Activated CD4-positive, alpha-beta T cell treated with anti-CD3 and anti-CD28 coated beads for 36 hours (primary cell): ENCODE measurements at regions of chr1 and their contacts with region 1.

Region 1: GRCh38 chr1:161225534-161226319 is at the start of gene TOMM40L:
- DNase-seq: peak; percentile 91
- ATAC-seq: peak; percentile 95
- H3K4me3 Mint-ChIP-seq: peak within 1 kb of the TSS; percentile 97
- H3K27ac Mint-ChIP-seq: peak within 1 kb of the TSS; percentile 98
- H3K4me1 Mint-ChIP-seq: peaks cover 33% of the 10 kb centered on the region
- H3K27me3 Mint-ChIP-seq: no peaks in the 10 kb centered on the region
- total RNA-seq, gene TOMM40L: 12.3 to 13.2 TPM

Region 2: GRCh38 chr1:161076410-161076809 is 149.3 kb before region 1 on chr1:
- CTCF ChIA-PET with region 1: no interaction called
- POLR2A ChIA-PET with region 1: no interaction called
- intact Hi-C with region 1: no loop called
- DNase-seq: no peak
- ATAC-seq: no peak
- H3K4me3 Mint-ChIP-seq: no peak overlapping the region
- H3K27ac Mint-ChIP-seq: no peak overlapping the region
- H3K4me1 Mint-ChIP-seq: peaks cover 7% of the 10 kb centered on the region
- H3K27me3 Mint-ChIP-seq: peaks cover 2% of the 10 kb centered on the region

Region 3: GRCh38 chr1:161132410-161133219 is 93.1 kb before region 1 on chr1 and contains the start of gene DEDD:
- CTCF ChIA-PET with region 1: interaction called, 3 read pairs
- POLR2A ChIA-PET with region 1: interaction called, 8 read pairs
- intact Hi-C with region 1: loop called (anchors 1 kb)
- DNase-seq: peak; percentile 95
- ATAC-seq: peak; percentile 97
- H3K4me3 Mint-ChIP-seq: no peak within 1 kb of the TSS
- H3K27ac Mint-ChIP-seq: peak within 1 kb of the TSS; percentile 62
- H3K4me1 Mint-ChIP-seq: peaks cover 44% of the 10 kb centered on the region
- H3K27me3 Mint-ChIP-seq: no peaks in the 10 kb centered on the region
- total RNA-seq, gene DEDD: 33.9 to 44.9 TPM

Region 4: GRCh38 chr1:161177112-161177935 is 48.4 kb before region 1 on chr1 and contains the start of gene B4GALT3:
- CTCF ChIA-PET with region 1: interaction called, 12 read pairs
- POLR2A ChIA-PET with region 1: interaction called, 9 read pairs
- intact Hi-C with region 1: loop called in 1 of 2 experiments (anchors 1 kb)
- DNase-seq: peak; percentile 98
- ATAC-seq: peak; percentile 86
- H3K4me3 Mint-ChIP-seq: peak within 1 kb of the TSS; percentile 91
- H3K27ac Mint-ChIP-seq: peak within 1 kb of the TSS; percentile 98
- H3K4me1 Mint-ChIP-seq: peaks cover 57% of the 10 kb centered on the region
- H3K27me3 Mint-ChIP-seq: no peaks in the 10 kb centered on the region
- total RNA-seq, gene B4GALT3: 40.5 to 51.8 TPM

Region 5: DNA sequence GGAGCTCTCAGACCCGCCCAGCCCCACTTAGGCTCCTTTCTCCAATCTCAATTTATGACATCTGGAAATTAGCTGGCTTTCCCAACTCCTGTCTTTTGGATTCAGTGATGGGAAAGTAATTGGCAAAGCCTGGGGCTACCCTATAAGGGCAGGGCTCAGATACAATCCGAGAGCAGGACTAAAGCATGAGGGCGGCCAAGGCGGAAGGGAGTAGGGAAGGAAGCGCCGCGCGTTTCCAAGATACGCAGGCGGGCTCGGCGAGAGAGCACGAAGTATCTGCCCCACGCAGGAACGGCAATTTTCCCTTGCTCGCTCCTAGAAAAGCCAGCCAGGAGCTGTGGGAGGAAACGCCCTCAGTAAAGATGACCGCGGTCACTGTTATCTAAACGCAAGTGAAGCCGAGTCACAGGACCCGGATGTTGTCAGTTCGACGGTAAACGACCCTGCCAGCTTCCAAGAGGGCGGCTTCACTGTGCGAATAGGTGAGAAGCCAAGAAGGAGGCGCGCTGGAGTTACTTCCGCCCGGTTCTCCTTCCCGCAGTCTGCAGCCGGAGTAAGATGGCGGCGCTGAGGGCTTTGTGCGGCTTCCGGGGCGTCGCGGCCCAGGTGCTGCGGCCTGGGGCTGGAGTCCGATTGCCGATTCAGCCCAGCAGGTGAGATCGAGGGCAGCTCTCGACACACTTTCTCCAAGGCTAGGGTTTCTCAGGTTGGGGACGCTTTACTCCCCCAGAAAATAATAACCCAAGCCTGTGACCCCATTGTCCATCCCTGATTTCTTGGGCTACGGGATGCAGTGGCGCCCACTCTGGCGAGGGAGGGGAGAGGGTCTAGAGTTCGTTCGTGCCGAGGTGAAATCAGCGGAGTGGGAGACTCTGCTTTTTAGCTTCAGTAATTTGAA is 23.6 kb before region 1 on chr1 and contains the start of gene NDUFS2:
- CTCF ChIA-PET with region 1: interaction called, 89 read pairs
- POLR2A ChIA-PET with region 1: interaction called, 16 read pairs
- intact Hi-C with region 1: loop called (anchors 1 kb)
- DNase-seq: peak; percentile 97
- ATAC-seq: peak; percentile 99
- H3K4me3 Mint-ChIP-seq: peak within 1 kb of the TSS; percentile 92
- H3K27ac Mint-ChIP-seq: peak within 1 kb of the TSS; percentile 95
- H3K4me1 Mint-ChIP-seq: peaks cover 50% of the 10 kb centered on the region
- H3K27me3 Mint-ChIP-seq: no peaks in the 10 kb centered on the region
- total RNA-seq, gene NDUFS2: 71.8 to 92.0 TPM

Region 6: GRCh38 chr1:161292631-161293030 is 66.9 kb after region 1 on chr1:
- CTCF ChIA-PET with region 1: interaction called, 27 read pairs
- POLR2A ChIA-PET with region 1: interaction called, 3 read pairs
- intact Hi-C with region 1: loop called (anchors 1 kb)
- DNase-seq: no peak
- ATAC-seq: no peak
- H3K4me3 Mint-ChIP-seq: no peak overlapping the region
- H3K27ac Mint-ChIP-seq: no peak overlapping the region
- H3K4me1 Mint-ChIP-seq: no peaks in the 10 kb centered on the region
- H3K27me3 Mint-ChIP-seq: no peaks in the 10 kb centered on the region

Region 7: GRCh38 chr1:161382214-161383019 is 156.7 kb after region 1 on chr1:
- CTCF ChIA-PET with region 1: interaction called, 108 read pairs
- POLR2A ChIA-PET with region 1: no interaction called
- intact Hi-C with region 1: loop called (anchors 1 kb)
- DNase-seq: no peak
- ATAC-seq: peak; percentile 79
- H3K4me3 Mint-ChIP-seq: no peak overlapping the region
- H3K27ac Mint-ChIP-seq: peak overlapping the region; percentile 66
- H3K4me1 Mint-ChIP-seq: peaks cover 17% of the 10 kb centered on the region
- H3K27me3 Mint-ChIP-seq: no peaks in the 10 kb centered on the region

Region 8: DNA sequence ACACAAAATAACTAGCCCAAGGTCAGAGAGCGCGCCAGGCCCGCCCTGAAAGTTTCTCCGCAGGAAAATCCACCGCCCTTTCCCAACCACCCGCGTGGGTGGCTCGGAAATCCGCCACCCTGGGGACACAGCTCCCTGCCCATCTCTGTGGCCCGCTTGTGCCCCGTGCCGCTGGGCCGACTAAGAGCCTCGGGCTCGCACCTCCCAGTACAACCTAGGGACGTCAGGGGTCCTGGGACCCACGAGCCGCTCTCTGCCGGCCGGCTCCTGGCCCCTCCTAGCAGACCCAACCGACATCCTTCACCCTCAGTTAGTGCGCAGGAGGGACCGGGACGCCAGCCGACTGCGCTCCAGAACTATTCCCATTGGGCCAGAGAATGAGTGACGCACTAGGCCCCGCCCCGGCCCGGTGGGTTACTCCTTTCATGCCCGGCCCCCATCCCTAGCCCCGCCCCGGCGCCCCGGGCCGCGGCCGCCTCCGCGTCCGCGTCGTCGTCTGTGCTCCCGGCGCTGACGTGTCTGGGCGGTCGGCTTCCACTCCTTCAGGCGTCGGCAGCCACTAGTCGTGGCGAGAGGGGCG is 1335.4 kb after region 1 on chr1:
- CTCF ChIA-PET with region 1: no interaction called
- POLR2A ChIA-PET with region 1: no interaction called
- intact Hi-C with region 1: loop called in 1 of 2 experiments (anchors 5 kb)
- DNase-seq: peak; percentile 99
- ATAC-seq: peak; percentile 98
- H3K4me3 Mint-ChIP-seq: peak overlapping the region; percentile 79
- H3K27ac Mint-ChIP-seq: peak overlapping the region; percentile 94
- H3K4me1 Mint-ChIP-seq: peaks cover 35% of the 10 kb centered on the region
- H3K27me3 Mint-ChIP-seq: no peaks in the 10 kb centered on the region